Activated CD8-positive, alpha-beta T cell treated with anti-CD3 and anti-CD28 coated beads, Interleukin-2, amount 10 ng/mL, durations not matched to agents 7 days and 5 days (primary cell): ENCODE measurements at regions of chr1 and their contacts with region 1.

Region 1: GRCh38 chr1:210400043-210400840 is 71.5 kb downstream of the HHAT start:
- DNase-seq: peak; percentile 63
- ATAC-seq: peak; percentile 85
- H3K4me3 Mint-ChIP-seq: no peak overlapping the region
- H3K27ac Mint-ChIP-seq: no peak overlapping the region
- H3K4me1 Mint-ChIP-seq: peaks cover 13% of the 10 kb centered on the region
- H3K27me3 Mint-ChIP-seq: peaks cover 7% of the 10 kb centered on the region

Region 2: DNA sequence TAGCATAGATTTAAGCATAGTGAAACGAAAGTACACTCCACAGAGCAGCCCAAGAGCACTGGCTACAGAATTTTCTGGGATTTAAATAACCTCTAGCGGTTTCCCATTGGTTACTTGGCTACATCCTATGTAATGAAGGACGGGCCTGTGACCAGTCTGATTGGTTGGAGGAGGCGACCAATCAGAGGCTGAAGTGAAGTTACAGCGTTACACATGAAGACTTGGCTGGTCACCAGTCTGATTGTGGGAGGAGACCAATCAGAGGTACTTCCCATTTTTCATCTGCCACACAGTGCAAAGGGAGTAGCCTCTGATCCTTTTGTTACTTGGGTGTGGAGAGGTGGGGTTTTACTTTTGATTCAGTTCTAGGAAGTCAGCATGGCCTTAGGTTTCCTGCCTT is 310.4 kb before region 1 on chr1:
- CTCF ChIA-PET with region 1: no interaction called
- POLR2A ChIA-PET with region 1: no interaction called
- DNase-seq: no peak
- ATAC-seq: no peak
- H3K4me3 Mint-ChIP-seq: no peak overlapping the region
- H3K27ac Mint-ChIP-seq: no peak overlapping the region
- H3K4me1 Mint-ChIP-seq: no peaks in the 10 kb centered on the region
- H3K27me3 Mint-ChIP-seq: no peaks in the 10 kb centered on the region

Region 3: DNA sequence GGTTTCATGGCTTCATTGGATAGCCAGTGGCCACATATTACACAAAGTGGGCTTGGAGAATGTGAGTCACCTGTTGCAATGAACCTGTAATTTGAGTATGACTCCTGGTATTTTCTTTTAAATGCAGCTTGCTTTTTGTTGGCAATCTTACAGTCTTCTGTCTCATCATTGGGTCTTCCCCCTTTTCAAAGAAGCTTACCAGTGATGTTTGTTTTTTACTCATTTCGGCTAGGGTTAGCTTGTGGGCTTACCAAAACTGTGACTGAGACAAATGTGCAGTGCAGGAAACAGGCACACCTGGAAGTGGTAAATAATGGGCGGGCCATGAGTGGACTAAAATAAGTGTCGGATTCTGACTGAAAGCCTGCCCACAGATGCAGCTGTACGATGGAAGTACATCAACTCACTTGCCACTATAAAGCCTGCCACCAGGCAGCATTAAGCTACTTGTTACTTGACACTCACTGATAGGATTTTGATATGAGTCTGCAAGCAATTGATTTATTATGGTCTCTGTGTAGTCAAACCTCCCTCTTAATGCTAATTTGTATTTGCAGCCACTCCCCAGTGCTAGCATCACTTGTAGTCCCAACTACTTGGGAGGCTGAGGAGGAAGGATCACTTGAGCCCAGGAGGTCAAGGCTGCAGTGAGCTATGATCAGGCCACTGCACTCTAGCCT is 67.4 kb before region 1 on chr1:
- CTCF ChIA-PET with region 1: interaction called, 22 read pairs
- POLR2A ChIA-PET with region 1: interaction called, 3 read pairs
- DNase-seq: peak; percentile 81
- ATAC-seq: peak; percentile 34
- H3K4me3 Mint-ChIP-seq: peak overlapping the region; percentile 29
- H3K27ac Mint-ChIP-seq: peak overlapping the region; percentile 65
- H3K4me1 Mint-ChIP-seq: peaks cover 42% of the 10 kb centered on the region
- H3K27me3 Mint-ChIP-seq: no peaks in the 10 kb centered on the region

Region 4: DNA sequence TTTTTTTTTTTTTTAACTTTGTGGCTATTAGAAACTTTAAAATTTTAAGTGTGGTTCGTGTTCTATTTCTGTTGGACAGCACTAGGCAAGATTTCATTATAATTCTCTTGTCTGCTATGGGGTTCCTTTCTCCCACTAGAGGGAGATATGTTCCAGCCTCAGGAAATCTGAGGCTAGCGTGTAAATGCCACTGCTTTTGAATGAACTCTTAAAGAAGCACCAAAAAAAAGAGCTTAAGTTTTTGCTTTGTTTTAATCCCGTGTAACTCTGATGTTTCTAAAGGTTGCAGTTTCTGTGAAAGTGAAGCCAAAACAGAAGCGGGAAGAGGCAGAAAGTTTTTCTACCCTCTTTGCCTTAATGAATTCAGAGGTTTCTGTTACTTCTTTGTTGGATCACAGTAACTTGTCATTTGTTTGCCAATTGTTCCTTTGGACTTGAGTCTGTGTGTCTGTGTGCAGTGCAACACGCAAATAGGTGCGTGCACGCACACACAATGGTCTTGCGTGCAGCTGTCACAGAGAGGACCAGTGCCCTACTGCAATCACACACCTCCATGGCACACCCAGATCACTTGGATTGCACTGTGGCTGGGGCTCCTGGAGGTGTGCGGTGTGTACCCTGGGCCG is 39.3 kb before region 1 on chr1:
- CTCF ChIA-PET with region 1: interaction called, 42 read pairs
- POLR2A ChIA-PET with region 1: interaction called, 8 read pairs
- DNase-seq: no peak
- ATAC-seq: peak; percentile 69
- H3K4me3 Mint-ChIP-seq: no peak overlapping the region
- H3K27ac Mint-ChIP-seq: no peak overlapping the region
- H3K4me1 Mint-ChIP-seq: no peaks in the 10 kb centered on the region
- H3K27me3 Mint-ChIP-seq: peaks cover 7% of the 10 kb centered on the region

Region 5: DNA sequence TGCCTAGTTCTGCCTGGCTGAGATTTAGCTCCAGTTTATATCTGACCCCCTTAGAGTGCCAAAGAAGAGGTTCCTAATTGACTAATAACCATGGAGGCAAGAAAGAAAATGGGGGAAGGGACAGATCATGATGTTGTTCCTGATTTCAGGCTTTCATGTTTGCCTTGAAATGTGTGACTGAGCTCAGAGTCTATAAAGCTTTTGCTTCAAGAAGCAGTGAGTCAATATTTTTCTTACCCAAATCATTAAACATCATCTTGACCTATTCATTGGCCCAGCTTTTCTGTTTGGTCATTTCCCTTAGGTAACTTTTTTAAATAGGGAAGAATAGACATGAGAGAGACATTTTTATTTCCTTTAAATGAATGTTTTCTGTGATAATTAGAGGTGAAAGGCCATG is 15.6 kb before region 1 on chr1:
- CTCF ChIA-PET with region 1: interaction called, 13 read pairs
- POLR2A ChIA-PET with region 1: no interaction called
- DNase-seq: no peak
- ATAC-seq: no peak
- H3K4me3 Mint-ChIP-seq: no peak overlapping the region
- H3K27ac Mint-ChIP-seq: no peak overlapping the region
- H3K4me1 Mint-ChIP-seq: no peaks in the 10 kb centered on the region
- H3K27me3 Mint-ChIP-seq: no peaks in the 10 kb centered on the region

Region 6: GRCh38 chr1:210438928-210439809 is 38.9 kb after region 1 on chr1:
- CTCF ChIA-PET with region 1: no interaction called
- POLR2A ChIA-PET with region 1: no interaction called
- DNase-seq: no peak
- ATAC-seq: no peak
- H3K4me3 Mint-ChIP-seq: no peak overlapping the region
- H3K27ac Mint-ChIP-seq: no peak overlapping the region
- H3K4me1 Mint-ChIP-seq: no peaks in the 10 kb centered on the region
- H3K27me3 Mint-ChIP-seq: no peaks in the 10 kb centered on the region